ENCODE measurements at regions of chr18 and their contacts with region 1.

Region 1: GRCh38 chr18:64936671-64937070 is 787.8 kb upstream of the LINC00305 start:
- DNase-seq: no peak
- ATAC-seq: no peak
- H3K4me3 Mint-ChIP-seq: no peak overlapping the region
- H3K27ac Mint-ChIP-seq: no peak overlapping the region
- H3K4me1 Mint-ChIP-seq: no peaks in the 10 kb centered on the region
- H3K27me3 Mint-ChIP-seq: no peaks in the 10 kb centered on the region
- CTCF ChIP-seq: no peak

Region 2: DNA sequence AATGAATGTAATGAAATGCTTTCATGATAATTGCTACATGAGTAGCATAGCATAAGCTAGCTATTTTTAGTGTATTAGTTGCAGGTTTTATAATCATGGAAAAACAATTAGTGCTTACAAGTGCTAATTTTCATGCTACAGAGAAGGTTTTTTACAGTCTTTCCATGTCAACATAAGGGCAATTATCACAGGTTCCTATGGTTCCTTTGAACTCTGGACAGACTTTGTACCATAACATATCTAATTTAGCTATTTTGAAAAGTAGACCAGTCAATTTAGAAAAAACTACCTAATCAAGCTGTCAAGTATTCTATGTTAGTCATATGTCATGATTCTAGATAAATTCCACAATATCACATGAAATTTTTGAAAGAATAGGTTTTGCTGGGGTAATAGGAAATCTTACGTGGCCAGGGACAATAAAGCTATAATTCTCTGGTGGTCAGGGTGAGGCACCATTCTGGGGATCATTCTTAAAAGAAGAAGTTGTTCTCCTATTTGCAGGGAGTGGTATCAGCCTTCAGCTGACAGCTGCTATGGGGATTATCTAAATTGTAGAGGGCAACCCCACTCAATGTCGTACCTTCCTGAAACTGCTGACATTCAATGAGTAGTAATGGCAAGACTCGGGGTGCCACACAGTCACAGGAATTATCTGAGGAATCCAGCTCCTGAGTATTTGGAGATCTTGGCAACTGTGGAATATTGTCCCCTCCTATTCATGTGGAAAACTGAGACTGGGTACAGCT is 63.8 kb before region 1 on chr18:
- CTCF ChIA-PET with region 1: no interaction called
- POLR2A ChIA-PET with region 1: no interaction called
- intact Hi-C with region 1: loop called (anchors 10 kb)
- DNase-seq: no peak
- ATAC-seq: no peak
- H3K4me3 Mint-ChIP-seq: no peak overlapping the region
- H3K27ac Mint-ChIP-seq: no peak overlapping the region
- H3K4me1 Mint-ChIP-seq: no peaks in the 10 kb centered on the region
- H3K27me3 Mint-ChIP-seq: no peaks in the 10 kb centered on the region
- CTCF ChIP-seq: no peak

Region 3: GRCh38 chr18:64949885-64950284 is 13.2 kb after region 1 on chr18:
- CTCF ChIA-PET with region 1: no interaction called
- POLR2A ChIA-PET with region 1: no interaction called
- intact Hi-C with region 1: no loop called
- DNase-seq: no peak
- ATAC-seq: no peak
- H3K4me3 Mint-ChIP-seq: no peak overlapping the region
- H3K27ac Mint-ChIP-seq: no peak overlapping the region
- H3K4me1 Mint-ChIP-seq: no peaks in the 10 kb centered on the region
- H3K27me3 Mint-ChIP-seq: no peaks in the 10 kb centered on the region
- CTCF ChIP-seq: no peak

Measured in activated B cell treated with CpG ODN at 0.5 μM for 24 hours (primary cell).